ENCODE measurements at regions of chr3 and their contacts with region 1.

Region 1: DNA sequence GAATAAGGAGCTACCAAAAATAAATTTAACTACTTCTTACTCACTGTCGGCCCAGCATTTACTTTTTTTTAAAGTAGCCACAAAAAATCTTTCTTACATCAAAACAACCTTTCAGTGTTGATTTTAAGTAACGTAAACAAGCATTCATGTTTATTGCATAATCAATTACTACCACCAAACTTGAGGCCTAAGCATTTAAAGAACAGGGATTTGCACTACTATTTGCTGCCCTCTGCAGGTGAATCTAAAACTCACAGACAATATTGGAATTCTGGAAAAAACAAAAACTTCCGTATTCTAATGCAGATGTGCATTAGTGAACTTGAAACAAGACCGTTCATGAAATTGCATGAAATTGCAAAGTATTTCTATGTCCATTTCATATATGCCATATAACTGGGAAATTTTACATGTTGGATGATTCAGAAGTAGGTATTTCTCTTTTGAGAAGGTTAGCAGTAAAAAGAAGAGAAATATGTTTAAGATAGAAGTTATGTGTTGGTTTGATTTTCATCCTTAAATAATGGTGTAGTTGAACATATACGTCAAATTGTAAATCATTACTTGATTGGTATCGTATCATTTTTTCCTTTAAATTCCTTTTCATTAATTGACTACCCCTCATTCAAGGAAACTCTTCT is 55.6 kb downstream of the CGGBP1 start:
- DNase-seq: no peak
- ATAC-seq: no peak
- H3K4me3 ChIP-seq: no peak overlapping the region
- H3K27ac ChIP-seq: no peak overlapping the region
- H3K4me1 ChIP-seq: no peaks in the 10 kb centered on the region
- H3K27me3 ChIP-seq: no peaks in the 10 kb centered on the region

Region 2: GRCh38 chr3:87350364-87351199 is 652.7 kb before region 1 on chr3:
- intact Hi-C with region 1: loop called in 3 of 4 experiments (anchors 5 to 10 kb)
- DNase-seq: no peak
- ATAC-seq: peak; percentile 66 to 79
- H3K4me3 ChIP-seq: no peak overlapping the region
- H3K27ac ChIP-seq: no peak overlapping the region
- H3K4me1 ChIP-seq: no peaks in the 10 kb centered on the region
- H3K27me3 ChIP-seq: no peaks in the 10 kb centered on the region

Region 3: GRCh38 chr3:87848003-87848402 is 155.2 kb before region 1 on chr3:
- intact Hi-C with region 1: no loop called
- DNase-seq: no peak
- ATAC-seq: no peak
- H3K4me3 ChIP-seq: no peak overlapping the region
- H3K27ac ChIP-seq: no peak overlapping the region
- H3K4me1 ChIP-seq: no peaks in the 10 kb centered on the region
- H3K27me3 ChIP-seq: no peaks in the 10 kb centered on the region

Region 4: DNA sequence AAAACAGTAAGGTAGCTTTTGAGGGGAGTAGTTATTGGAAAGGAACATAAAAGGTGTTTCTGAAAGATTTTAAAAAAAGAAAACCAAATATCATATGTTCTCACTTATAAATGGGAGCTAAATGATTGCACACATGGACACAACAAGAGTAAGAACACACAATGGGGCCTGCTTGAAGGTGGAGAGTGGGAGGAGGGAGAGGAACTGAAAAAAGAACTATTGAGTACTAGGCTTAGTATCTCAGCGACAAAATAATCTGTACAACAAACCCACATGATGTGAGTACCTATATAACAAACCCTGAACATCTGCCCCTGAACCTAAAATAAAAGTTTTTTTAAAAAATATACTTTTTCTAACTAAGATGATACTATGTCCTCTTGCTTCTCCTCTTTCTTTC is 82.7 kb before region 1 on chr3:
- intact Hi-C with region 1: no loop called
- DNase-seq: no peak
- ATAC-seq: no peak
- H3K4me3 ChIP-seq: no peak overlapping the region
- H3K27ac ChIP-seq: no peak overlapping the region
- H3K4me1 ChIP-seq: no peaks in the 10 kb centered on the region
- H3K27me3 ChIP-seq: no peaks in the 10 kb centered on the region

Region 5: GRCh38 chr3:88113311-88114162 is 110.3 kb after region 1 on chr3:
- intact Hi-C with region 1: loop called in 1 of 4 experiments (anchors 10 kb)
- DNase-seq: no peak
- ATAC-seq: peak; percentile 77 to 92
- H3K4me3 ChIP-seq: no peak overlapping the region
- H3K27ac ChIP-seq: no peak overlapping the region
- H3K4me1 ChIP-seq: no peaks in the 10 kb centered on the region
- H3K27me3 ChIP-seq: no peaks in the 10 kb centered on the region